ENCODE measurements at regions of chr2 and their contacts with region 1.

Region 1: DNA sequence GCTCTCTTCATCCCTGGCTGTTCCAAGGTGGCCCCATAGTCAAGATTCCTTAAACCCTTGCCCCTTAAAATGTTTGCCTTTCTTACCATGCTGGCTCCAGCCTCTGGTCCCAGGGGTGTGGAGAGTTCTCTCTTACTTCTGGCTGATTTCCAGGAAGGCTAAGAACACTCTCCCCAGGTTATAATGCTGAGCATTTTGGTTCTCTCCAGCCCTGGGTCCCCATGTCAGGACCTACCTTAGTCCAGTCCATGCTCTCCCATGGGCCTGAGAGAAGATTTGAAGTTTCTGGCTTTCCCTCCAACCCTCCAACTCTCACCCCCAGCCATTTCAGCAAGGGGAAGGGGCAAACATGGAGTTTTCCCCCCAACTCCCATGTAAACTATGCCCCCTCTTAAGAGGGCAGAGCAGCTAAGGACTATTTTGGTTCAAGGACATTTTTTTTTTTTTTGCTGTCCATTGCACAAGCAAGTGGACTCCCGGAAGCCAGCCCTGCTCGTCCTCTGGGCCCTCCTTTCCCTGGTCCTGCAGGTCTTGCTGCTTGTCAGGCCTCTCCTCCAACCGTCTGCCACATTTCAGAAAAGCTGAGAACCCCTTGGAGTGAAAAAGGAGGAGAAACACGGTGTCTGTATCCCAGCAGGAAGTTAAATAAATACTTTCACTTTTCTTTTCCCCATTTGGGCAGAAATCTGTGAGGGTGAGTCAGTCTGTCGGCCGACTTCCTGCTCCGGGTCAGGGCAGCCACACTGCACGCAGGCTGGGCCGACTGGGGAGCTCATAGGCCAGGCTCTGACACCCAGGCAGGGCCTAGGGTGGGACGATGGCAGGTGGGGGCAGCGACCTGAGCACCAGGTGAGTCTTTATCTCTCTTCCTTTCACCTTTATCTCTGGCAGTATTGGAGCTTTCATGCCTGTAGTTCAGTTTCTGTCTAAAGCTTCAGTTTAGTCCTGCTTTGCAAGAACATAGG is at the start of gene SP140L:
- H3K4me3 Mint-ChIP-seq: peak within 1 kb of the TSS; percentile 79
- H3K27ac Mint-ChIP-seq: peak within 1 kb of the TSS; percentile 99
- H3K4me1 Mint-ChIP-seq: peaks cover 62% of the 10 kb centered on the region
- H3K27me3 Mint-ChIP-seq: no peaks in the 10 kb centered on the region

Region 2: GRCh38 chr2:229921892-229922445 is 404.8 kb before region 1 on chr2 and contains the start of gene TRIP12:
- intact Hi-C with region 1: loop called (anchors 10 kb)
- H3K4me3 Mint-ChIP-seq: peak within 1 kb of the TSS; percentile 98
- H3K27ac Mint-ChIP-seq: peak within 1 kb of the TSS; percentile 98
- H3K4me1 Mint-ChIP-seq: peaks cover 35% of the 10 kb centered on the region
- H3K27me3 Mint-ChIP-seq: no peaks in the 10 kb centered on the region

Region 3: DNA sequence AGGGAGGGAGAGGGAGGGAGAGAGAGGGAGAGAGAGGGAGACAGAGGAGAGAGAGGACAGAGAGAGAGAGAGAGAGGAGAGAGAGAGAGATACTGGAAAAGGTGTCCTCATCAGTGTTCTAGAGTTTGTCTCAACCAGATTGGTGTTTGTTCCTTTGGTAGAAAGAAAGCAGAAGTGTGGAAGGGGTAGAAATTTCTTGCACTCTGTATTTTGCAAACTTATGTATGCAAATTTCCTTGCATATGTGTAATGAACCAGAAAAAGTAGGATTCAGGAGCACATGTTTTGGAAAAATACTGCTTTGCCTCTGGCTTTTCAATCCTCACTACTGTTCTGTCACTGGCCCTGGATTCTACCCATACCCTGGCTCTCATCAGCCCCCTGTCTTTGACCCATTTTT is 102.3 kb before region 1 on chr2:
- intact Hi-C with region 1: loop called (anchors 1 kb)
- H3K4me3 Mint-ChIP-seq: no peak overlapping the region
- H3K27ac Mint-ChIP-seq: peak overlapping the region; percentile 60
- H3K4me1 Mint-ChIP-seq: peaks cover 53% of the 10 kb centered on the region
- H3K27me3 Mint-ChIP-seq: no peaks in the 10 kb centered on the region

Region 4: DNA sequence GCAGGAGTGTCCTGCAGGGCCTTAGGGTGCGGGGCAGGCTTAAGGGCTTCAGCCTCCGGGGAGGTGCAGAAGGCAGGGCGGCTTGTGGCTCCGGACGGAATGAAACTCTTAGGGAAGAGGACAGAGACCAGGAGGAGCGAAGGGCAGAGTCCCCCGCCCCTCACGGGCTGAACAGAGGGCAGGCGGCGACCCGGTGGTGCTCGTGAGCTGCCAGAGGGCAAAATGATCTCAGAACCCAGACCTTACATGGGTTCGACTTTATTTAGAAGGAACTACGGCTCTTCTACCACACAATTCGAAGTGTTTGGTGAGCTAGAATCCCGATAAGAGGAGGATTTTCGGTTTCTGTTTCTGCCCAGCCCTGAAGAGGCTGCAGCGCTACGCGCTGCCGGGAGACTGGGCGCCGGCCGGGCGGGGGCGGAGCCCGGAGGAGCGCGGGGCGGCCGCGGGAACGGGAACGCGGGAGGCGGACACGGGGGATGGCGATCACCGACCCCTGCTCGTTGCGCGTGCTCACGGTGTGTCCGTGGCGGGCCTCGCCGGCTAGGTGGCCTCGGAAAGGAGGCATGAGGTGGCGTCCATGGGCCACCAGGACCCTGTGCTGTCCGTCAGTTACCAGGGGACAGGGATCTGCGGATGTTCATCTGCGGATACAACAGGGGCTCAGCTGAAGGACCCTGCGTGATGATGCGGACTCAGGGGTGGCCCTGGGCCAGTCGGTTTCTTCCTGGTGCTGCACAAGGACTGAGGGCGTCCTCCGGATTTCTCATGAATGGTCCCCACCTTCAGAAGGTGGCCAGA is 85.0 kb after region 1 on chr2:
- intact Hi-C with region 1: loop called (anchors 5 kb)
- H3K4me3 Mint-ChIP-seq: peak overlapping the region; percentile 94
- H3K27ac Mint-ChIP-seq: peak overlapping the region; percentile 96
- H3K4me1 Mint-ChIP-seq: peaks cover 66% of the 10 kb centered on the region
- H3K27me3 Mint-ChIP-seq: peaks cover 5% of the 10 kb centered on the region